ENCODE measurements at regions of chr1 and their contacts with region 1.

Region 1: DNA sequence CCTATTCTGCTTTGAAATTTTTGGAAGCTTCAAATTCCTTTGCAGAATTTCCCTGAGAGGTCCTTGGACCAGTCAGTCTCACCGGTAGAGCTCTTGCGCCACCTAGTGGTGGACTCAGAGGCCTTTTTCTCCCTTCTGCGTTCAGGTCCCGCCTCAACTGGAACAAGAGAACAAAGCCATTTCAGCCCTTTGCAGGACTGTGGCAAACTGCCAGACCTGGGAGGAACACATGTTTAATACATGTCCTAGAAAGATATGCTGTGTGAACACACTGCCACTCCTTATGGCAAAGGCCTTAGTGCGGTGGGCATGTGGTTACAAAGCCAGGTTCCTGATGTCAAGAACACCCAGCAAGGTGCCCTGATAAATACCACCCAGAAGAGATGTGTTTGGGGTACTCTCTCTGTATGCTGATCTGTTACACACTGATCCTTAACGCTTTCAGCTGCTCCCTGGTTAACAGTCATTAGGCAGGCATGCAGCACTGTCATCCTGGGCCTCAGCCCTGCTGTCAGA is 82.2 kb upstream of the SSX2IP start:
- DNase-seq: peak; percentile 78 to 87 (median 82)
- ATAC-seq: peak; percentile 96
- H3K4me3 ChIP-seq: no peak overlapping the region
- H3K27ac ChIP-seq: no peak overlapping the region
- H3K4me1 ChIP-seq: no peaks in the 10 kb centered on the region
- H3K27me3 ChIP-seq: peaks cover 2 to 10% of the 10 kb centered on the region in 2 experiments; a peak in 2 of 5 replicates
- CTCF ChIP-seq: peak; percentile 82 to 92 (median 89)
- EP300 ChIP-seq: no peak
- POLR2A ChIP-seq: no peak
- RAD21 ChIP-seq: peak; percentile 84 to 89

Region 2: GRCh38 chr1:84117868-84118267 is 654.6 kb before region 1 on chr1:
- CTCF ChIA-PET with region 1: no interaction called
- POLR2A ChIA-PET with region 1: no interaction called
- in situ Hi-C with region 1: no loop called
- intact Hi-C with region 1: loop called (anchors 10 kb)
- DNase-seq: no peak
- ATAC-seq: peak; percentile 83
- H3K4me3 ChIP-seq: no peak overlapping the region
- H3K27ac ChIP-seq: no peak overlapping the region
- H3K4me1 ChIP-seq: peaks cover 0 to 5% of the 10 kb centered on the region in 2 experiments; a peak in 2 of 5 replicates
- H3K27me3 ChIP-seq: no peaks in the 10 kb centered on the region
- CTCF ChIP-seq: no peak
- EP300 ChIP-seq: no peak; the same call in 1 of the 2 replicates
- POLR2A ChIP-seq: no peak
- RAD21 ChIP-seq: no peak

Region 3: GRCh38 chr1:84541679-84542078 is 230.8 kb before region 1 on chr1:
- CTCF ChIA-PET with region 1: no interaction called
- POLR2A ChIA-PET with region 1: no interaction called
- in situ Hi-C with region 1: no loop called
- intact Hi-C with region 1: loop called (anchors 5 kb)
- DNase-seq: peak in 1 of 4 experiments; percentile 9
- ATAC-seq: no peak
- H3K4me3 ChIP-seq: no peak overlapping the region
- H3K27ac ChIP-seq: no peak overlapping the region
- H3K4me1 ChIP-seq: no peaks in the 10 kb centered on the region
- H3K27me3 ChIP-seq: no peaks in the 10 kb centered on the region
- CTCF ChIP-seq: peak; percentile 25 to 58 (median 46); a peak in 3 of 6 replicates
- EP300 ChIP-seq: no peak
- POLR2A ChIP-seq: no peak
- RAD21 ChIP-seq: peak; percentile 43 to 71

Region 4: DNA sequence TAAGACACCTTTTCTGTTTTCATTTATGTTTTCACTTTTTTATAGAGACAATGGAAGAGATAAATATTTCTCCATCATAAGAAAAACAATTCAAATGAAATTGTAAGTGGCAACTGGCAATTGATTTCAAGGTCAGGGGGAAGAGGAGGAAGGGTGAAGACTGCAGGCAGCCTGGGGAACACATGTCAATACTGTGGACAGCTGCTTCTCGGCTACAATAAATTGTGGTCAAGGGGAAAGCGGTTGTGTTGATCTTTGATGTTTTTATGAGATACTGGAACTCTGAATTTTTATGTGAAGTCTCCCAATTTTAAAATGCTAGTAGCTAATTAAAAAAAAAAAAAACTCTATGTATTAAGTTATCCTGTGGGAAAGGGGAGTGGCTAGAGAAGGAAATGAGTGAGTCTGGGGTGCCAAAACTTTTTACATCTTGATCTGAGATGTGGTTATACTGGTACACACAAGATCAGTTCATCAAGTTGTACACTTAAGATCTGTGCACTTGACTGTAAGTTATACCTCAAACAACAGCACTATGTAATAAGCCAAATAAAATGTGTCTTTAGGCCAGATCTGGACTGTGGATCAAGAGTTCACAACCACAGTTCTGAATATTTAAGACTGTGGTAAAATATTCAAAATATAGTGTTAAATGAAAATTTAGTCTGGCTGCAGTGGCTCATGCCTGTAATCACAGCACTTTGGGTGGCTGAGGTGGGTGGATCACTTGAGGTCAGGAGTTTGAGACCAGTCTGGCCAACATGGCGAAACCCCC is 100.2 kb before region 1 on chr1:
- CTCF ChIA-PET with region 1: no interaction called
- POLR2A ChIA-PET with region 1: no interaction called
- in situ Hi-C with region 1: no loop called
- intact Hi-C with region 1: no loop called
- DNase-seq: no peak
- ATAC-seq: peak; percentile 38; the same call in 1 of the 3 replicates
- H3K4me3 ChIP-seq: no peak overlapping the region
- H3K27ac ChIP-seq: no peak overlapping the region
- H3K4me1 ChIP-seq: peaks cover 3 to 5% of the 10 kb centered on the region in 2 experiments; a peak in 2 of 5 replicates
- H3K27me3 ChIP-seq: no peaks in the 10 kb centered on the region
- CTCF ChIP-seq: no peak
- EP300 ChIP-seq: no peak
- POLR2A ChIP-seq: no peak
- RAD21 ChIP-seq: no peak

Region 5: DNA sequence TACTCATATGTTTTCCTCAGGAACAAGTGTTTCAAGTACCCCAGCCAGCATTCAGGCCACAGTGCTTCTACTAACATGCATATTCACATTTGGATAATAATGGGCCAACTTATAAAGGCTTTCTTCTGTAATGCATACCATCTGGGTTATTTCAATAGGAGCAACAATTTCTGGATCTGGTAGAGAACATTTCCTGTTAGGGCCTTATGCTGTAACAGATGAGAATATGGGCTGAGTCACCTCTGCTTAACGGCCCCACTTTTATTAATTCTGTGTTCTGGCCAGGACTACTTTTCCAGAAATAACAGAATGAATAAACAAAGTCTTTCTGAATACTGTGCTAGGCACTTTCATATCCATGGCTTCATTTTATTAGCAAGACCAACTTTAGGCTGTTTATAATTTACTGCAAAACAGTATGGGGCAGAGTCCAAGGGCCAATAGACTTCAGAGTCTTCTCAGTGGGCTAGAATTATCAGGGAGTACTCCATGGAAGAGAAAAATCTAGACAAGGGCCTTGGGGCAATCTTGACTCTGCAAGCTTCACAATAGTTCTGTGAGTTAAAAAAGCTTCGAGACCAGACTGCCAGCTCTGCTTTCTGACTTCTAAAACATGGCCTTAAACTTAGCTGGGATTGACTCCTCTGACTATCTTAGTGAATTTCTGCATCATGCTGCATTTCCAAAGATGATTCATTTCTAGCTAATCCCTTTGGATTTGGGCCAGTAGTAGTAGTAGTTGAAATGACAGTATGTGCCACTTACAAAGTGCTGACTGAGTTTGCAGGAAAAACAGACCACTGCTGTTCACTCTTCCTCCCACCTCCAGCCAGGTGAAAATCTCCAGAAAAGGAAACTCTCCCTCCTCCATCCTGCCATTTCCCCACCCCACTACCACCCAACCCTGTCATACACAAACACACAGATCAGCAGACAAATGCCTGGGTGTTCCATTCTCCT is 74.1 kb before region 1 on chr1:
- CTCF ChIA-PET with region 1: no interaction called
- POLR2A ChIA-PET with region 1: no interaction called
- in situ Hi-C with region 1: no loop called
- intact Hi-C with region 1: no loop called
- DNase-seq: peak; percentile 18 to 59 (median 29)
- ATAC-seq: peak; percentile 54
- H3K4me3 ChIP-seq: no peak overlapping the region
- H3K27ac ChIP-seq: peak overlapping the region; percentile 57; the same call in 2 of the 3 replicates
- H3K4me1 ChIP-seq: peaks cover 12 to 29% of the 10 kb centered on the region in 2 experiments; a peak in 4 of 5 replicates
- H3K27me3 ChIP-seq: no peaks in the 10 kb centered on the region
- CTCF ChIP-seq: no peak
- EP300 ChIP-seq: no peak
- POLR2A ChIP-seq: no peak
- RAD21 ChIP-seq: no peak

Region 6: DNA sequence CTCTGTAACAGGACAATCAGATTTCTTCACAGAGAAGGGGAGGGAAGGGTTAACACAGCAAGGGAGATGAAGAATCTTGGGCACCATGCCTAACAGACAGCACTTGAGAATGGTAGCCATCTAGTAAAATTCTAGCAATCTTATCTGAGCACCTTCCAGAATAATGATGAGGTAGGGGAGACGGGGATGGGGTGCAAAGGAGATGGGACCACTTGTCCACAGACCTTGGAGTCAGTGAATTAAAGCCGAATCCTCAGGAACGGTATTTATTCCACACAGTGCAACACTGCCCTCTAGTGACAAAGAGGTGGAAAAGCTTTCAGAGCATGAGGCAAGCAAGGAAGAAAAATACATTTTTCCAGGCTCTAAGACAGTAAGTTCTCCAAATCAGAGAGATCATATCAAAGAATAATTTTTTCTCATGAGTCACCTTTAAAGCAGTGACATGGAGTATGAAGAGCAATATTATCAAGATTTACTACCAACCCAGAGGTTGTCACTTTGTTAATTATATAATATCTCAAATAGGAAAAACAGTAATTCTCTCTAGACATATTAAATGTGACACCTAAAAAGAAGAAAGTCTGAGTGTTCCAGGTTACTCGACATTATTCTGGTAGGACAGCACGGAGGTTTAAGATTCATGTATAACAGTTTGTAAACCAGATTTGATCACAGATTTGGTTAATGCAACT is 163.8 kb after region 1 on chr1:
- CTCF ChIA-PET with region 1: no interaction called
- POLR2A ChIA-PET with region 1: no interaction called
- in situ Hi-C with region 1: no loop called
- intact Hi-C with region 1: loop called (anchors 5 kb)
- DNase-seq: peak; percentile 60 to 71 (median 63)
- ATAC-seq: peak; percentile 88
- H3K4me3 ChIP-seq: no peak overlapping the region
- H3K27ac ChIP-seq: no peak overlapping the region
- H3K4me1 ChIP-seq: no peaks in the 10 kb centered on the region
- H3K27me3 ChIP-seq: peaks cover 13 to 18% of the 10 kb centered on the region in 2 experiments; a peak in 4 of 5 replicates
- CTCF ChIP-seq: peak; percentile 67 to 90 (median 87)
- EP300 ChIP-seq: no peak
- POLR2A ChIP-seq: no peak
- RAD21 ChIP-seq: peak; percentile 83 to 85

Region 7: GRCh38 chr1:84973498-84974334 is 201.2 kb after region 1 on chr1:
- CTCF ChIA-PET with region 1: no interaction called
- POLR2A ChIA-PET with region 1: no interaction called
- in situ Hi-C with region 1: no loop called
- intact Hi-C with region 1: no loop called
- DNase-seq: no peak
- ATAC-seq: no peak
- H3K4me3 ChIP-seq: no peak overlapping the region
- H3K27ac ChIP-seq: no peak overlapping the region
- H3K4me1 ChIP-seq: no peaks in the 10 kb centered on the region
- H3K27me3 ChIP-seq: no peaks in the 10 kb centered on the region
- CTCF ChIP-seq: peak in 1 of 3 experiments; percentile 17; a peak in 1 of 6 replicates
- EP300 ChIP-seq: no peak
- POLR2A ChIP-seq: no peak
- RAD21 ChIP-seq: no peak